ENCODE measurements at regions of chr2 and their contacts with region 1.

Region 1: GRCh38 chr2:10122386-10123280 is at the start of gene RRM2:
- DNase-seq: peak; percentile 83 to 92
- H3K4me3 ChIP-seq: peak within 1 kb of the TSS; percentile 88
- H3K27ac ChIP-seq: peak within 1 kb of the TSS; percentile 93
- H3K4me1 ChIP-seq: peaks cover 34% of the 10 kb centered on the region
- H3K27me3 ChIP-seq: no peaks in the 10 kb centered on the region
- CTCF ChIP-seq: no peak
- total RNA-seq, gene RRM2: 90.4 and 105 TPM in 2 replicates

Region 2: GRCh38 chr2:10072656-10073480 is 49.8 kb before region 1 on chr2:
- CTCF ChIA-PET with region 1: interaction called, 3 read pairs
- POLR2A ChIA-PET with region 1: no interaction called
- intact Hi-C with region 1: loop called (anchors 2 kb)
- DNase-seq: peak; percentile 78 to 79
- H3K4me3 ChIP-seq: no peak overlapping the region
- H3K27ac ChIP-seq: no peak overlapping the region
- H3K4me1 ChIP-seq: no peaks in the 10 kb centered on the region; the same call in 1 of the 2 replicates
- H3K27me3 ChIP-seq: peaks cover 14% of the 10 kb centered on the region
- CTCF ChIP-seq: peak; percentile 96

Region 3: GRCh38 chr2:10267551-10268465 is 145.2 kb after region 1 on chr2:
- CTCF ChIA-PET with region 1: no interaction called
- POLR2A ChIA-PET with region 1: interaction called, 11 read pairs
- intact Hi-C with region 1: no loop called
- DNase-seq: no peak
- H3K4me3 ChIP-seq: no peak overlapping the region
- H3K27ac ChIP-seq: no peak overlapping the region
- H3K4me1 ChIP-seq: peaks cover 22% of the 10 kb centered on the region
- H3K27me3 ChIP-seq: no peaks in the 10 kb centered on the region
- CTCF ChIP-seq: no peak

Region 4: DNA sequence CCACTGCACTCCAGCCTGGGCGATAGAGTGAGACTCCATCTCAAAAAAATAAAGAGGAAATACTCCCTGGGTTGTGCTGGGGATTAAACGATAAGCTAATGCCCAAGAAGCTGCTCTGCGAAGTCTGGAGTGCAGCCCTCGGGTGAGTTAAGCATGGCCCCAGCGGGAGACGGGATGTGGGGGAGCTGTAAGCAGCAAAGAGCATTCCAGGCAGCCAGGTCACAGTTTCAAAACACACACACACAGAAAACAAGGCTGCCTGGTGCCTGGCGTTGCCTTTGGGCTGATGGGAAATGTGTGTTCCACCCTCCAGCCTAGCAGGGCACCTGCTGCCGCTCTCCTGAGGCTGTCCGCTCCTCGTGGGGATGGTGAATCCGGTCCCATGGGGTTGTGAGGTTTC is 301.4 kb after region 1 on chr2:
- CTCF ChIA-PET with region 1: no interaction called
- POLR2A ChIA-PET with region 1: no interaction called
- intact Hi-C with region 1: no loop called
- DNase-seq: no peak
- H3K4me3 ChIP-seq: no peak overlapping the region
- H3K27ac ChIP-seq: no peak overlapping the region
- H3K4me1 ChIP-seq: no peaks in the 10 kb centered on the region
- H3K27me3 ChIP-seq: no peaks in the 10 kb centered on the region
- CTCF ChIP-seq: no peak

Region 5: DNA sequence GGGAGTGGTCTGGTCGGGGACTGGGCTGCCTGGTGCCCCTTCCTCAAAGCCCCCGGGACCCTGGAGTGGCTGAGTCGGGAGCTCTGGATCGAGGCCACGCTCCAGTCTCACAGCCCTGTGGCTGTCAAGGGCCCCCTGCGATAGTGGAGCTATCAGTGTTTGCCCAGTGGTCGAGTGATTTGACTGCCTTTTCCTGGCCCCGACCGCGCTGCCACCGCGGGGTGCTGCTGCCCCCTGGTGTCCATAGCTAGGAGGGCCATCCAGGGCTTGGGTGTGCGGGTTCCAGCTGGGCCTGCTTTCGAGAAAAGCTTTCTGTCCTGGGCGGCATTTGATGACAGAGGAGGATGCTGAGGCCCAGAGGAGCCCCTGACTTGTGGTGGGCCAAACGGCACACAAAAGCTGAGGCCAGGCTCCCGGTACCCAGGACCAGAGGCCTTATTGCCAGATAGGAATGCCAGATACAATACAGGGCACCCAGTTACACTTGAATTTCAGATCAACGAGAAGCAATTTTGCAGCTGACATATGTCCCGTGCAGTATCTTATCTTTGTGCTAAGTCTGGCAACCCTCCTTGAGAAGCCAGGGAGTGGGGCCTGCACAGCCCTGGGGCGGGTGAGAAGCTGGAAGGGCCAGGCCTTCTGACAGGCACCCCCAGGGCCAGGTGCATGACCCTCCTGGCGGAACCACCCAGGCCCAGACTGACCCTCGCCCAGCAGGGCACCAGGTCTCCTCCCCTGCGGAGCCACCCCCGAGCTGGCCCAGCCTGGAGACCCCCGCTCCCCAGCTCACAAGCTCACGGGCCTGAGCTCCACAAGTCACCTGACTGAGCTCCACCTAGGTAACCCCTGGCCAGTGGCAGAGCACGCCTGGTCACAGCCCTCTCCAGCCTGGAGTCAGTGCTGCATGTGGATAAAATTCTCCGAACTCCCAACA is 312.5 kb after region 1 on chr2:
- CTCF ChIA-PET with region 1: interaction called, 22 read pairs
- POLR2A ChIA-PET with region 1: no interaction called
- intact Hi-C with region 1: loop called (anchors 1 kb)
- DNase-seq: peak; percentile 62 to 84
- H3K4me3 ChIP-seq: no peak overlapping the region
- H3K27ac ChIP-seq: no peak overlapping the region
- H3K4me1 ChIP-seq: no peaks in the 10 kb centered on the region; the same call in 1 of the 2 replicates
- H3K27me3 ChIP-seq: no peaks in the 10 kb centered on the region
- CTCF ChIP-seq: peak; percentile 97

Measured in PC-9 (cell line).